Astrocyte of the cerebellum (primary cell): ENCODE measurements at regions of chr9 and their contacts with region 1.

Region 1: GRCh38 chr9:75333624-75334023 is 245.3 kb downstream of the OSTF1 start:
- DNase-seq: no peak
- H3K4me3 ChIP-seq: no peak overlapping the region
- CTCF ChIP-seq: peak; percentile 14

Region 2: GRCh38 chr9:75390951-75391350 is 57.3 kb after region 1 on chr9:
- in situ Hi-C with region 1: loop called (anchors 5 kb)
- DNase-seq: no peak
- H3K4me3 ChIP-seq: no peak overlapping the region
- CTCF ChIP-seq: no peak

Region 3: GRCh38 chr9:75408391-75408790 is 74.8 kb after region 1 on chr9:
- in situ Hi-C with region 1: no loop called
- DNase-seq: no peak
- H3K4me3 ChIP-seq: no peak overlapping the region
- CTCF ChIP-seq: no peak